CD8-positive, alpha-beta memory T cell (primary cell): ENCODE measurements at regions of chr3 and their contacts with region 1.

Region 1: GRCh38 chr3:198080521-198081280 is 120.7 kb downstream of the LMLN start:
- DNase-seq: peak; percentile 60 to 85 (median 76)
- H3K4me3 ChIP-seq: peak overlapping the region; percentile 55
- H3K4me3 Mint-ChIP-seq: peak overlapping the region; percentile 69 to 90 (median 81)
- H3K27ac ChIP-seq: peak overlapping the region; percentile 51
- H3K27ac Mint-ChIP-seq: peak overlapping the region in 1 of 8 donors; percentile 91
- H3K4me1 ChIP-seq: peaks cover 9% of the 10 kb centered on the region
- H3K4me1 Mint-ChIP-seq: peaks cover 6 to 7% (median 6%) of the 10 kb centered on the region in 3 donors
- H3K27me3 ChIP-seq: peaks cover 20% of the 10 kb centered on the region
- H3K27me3 Mint-ChIP-seq: peaks cover 23 to 40% of the 10 kb centered on the region in 2 donors

Region 2: GRCh38 chr3:197846491-197846890 is 234.2 kb before region 1 on chr3:
- CTCF ChIA-PET with region 1: no interaction called
- POLR2A ChIA-PET with region 1: no interaction called
- DNase-seq: no peak
- H3K4me3 ChIP-seq: no peak overlapping the region
- H3K4me3 Mint-ChIP-seq: no peak overlapping the region
- H3K27ac ChIP-seq: no peak overlapping the region
- H3K27ac Mint-ChIP-seq: peak overlapping the region in 4 of 8 donors; percentile 0 to 78 (median 42)
- H3K4me1 ChIP-seq: peaks cover 17% of the 10 kb centered on the region
- H3K4me1 Mint-ChIP-seq: peaks cover 14 to 27% (median 25%) of the 10 kb centered on the region in 3 donors
- H3K27me3 ChIP-seq: no peaks in the 10 kb centered on the region
- H3K27me3 Mint-ChIP-seq: no peaks in the 10 kb centered on the region

Region 3: GRCh38 chr3:197878427-197878826 is 202.3 kb before region 1 on chr3:
- CTCF ChIA-PET with region 1: no interaction called
- POLR2A ChIA-PET with region 1: no interaction called
- DNase-seq: no peak
- H3K4me3 ChIP-seq: no peak overlapping the region
- H3K4me3 Mint-ChIP-seq: no peak overlapping the region
- H3K27ac ChIP-seq: no peak overlapping the region
- H3K27ac Mint-ChIP-seq: peak overlapping the region in 6 of 8 donors; percentile 22 to 91 (median 75)
- H3K4me1 ChIP-seq: no peaks in the 10 kb centered on the region
- H3K4me1 Mint-ChIP-seq: peaks cover 6 to 13% (median 7%) of the 10 kb centered on the region in 3 donors
- H3K27me3 ChIP-seq: no peaks in the 10 kb centered on the region
- H3K27me3 Mint-ChIP-seq: no peaks in the 10 kb centered on the region

Region 4: DNA sequence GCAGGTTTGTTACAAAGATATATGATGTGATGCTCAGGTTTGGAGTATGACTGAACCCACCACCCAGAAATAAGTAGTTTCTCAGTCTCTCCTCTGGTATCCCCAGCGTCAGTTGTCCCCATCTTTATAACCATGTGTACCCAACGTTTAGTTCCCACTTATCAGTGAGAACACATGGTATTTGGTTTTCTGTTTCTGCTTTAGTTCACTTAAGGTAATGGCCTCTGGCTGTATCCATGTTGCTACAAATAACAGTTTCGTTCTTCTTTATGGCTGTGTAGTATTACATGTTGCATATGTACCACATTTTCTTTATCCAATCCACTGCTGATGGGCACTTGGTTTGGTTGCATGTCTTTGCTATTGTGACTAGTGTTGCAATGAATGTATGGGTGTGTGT is 11.6 kb after region 1 on chr3:
- CTCF ChIA-PET with region 1: interaction called, 13 read pairs
- POLR2A ChIA-PET with region 1: no interaction called
- DNase-seq: no peak
- H3K4me3 ChIP-seq: no peak overlapping the region
- H3K4me3 Mint-ChIP-seq: no peak overlapping the region
- H3K27ac ChIP-seq: no peak overlapping the region
- H3K27ac Mint-ChIP-seq: no peak overlapping the region
- H3K4me1 ChIP-seq: no peaks in the 10 kb centered on the region
- H3K4me1 Mint-ChIP-seq: no peaks in the 10 kb centered on the region
- H3K27me3 ChIP-seq: no peaks in the 10 kb centered on the region
- H3K27me3 Mint-ChIP-seq: peaks cover 27 to 55% of the 10 kb centered on the region in 2 donors